Left cardiac atrium (tissue), 4 donors: ENCODE measurements at regions of chr3 and their contacts with region 1.

Region 1: DNA sequence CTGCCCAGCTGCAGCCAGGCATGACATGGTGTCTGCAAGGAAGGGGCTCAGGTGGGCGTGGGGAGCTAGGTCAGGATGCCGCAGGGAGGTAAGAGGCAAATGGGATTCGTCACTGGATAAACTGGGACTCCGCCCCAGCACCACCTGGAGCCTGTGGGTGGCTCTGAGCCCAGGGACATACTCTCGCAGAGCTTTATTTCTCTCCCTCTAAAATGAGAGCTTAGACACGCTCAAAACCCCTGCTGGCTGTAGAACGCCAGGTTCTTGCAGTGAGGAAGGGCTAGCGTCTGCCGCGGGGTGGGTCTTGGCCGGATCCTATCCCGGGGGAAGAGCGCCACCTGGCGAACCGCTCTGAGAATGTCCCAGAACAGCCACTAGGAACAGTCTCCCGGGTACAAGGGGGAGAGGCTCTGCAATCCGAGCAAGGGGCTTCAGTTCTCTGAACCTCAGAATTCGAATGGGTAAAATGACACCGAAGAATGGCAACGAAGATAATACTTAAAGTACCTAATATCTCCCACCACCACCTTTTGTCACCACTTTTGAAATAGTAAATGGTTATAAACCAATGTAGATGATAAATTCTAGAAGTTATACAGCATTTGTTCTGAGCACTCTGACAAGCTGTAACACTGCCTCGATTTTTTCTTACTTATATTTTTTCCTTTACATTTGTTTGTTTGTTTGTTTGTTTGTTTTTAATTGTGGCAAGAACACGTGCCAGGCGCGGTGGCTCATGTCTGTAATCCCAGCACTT is 53.2 kb upstream of the SRGAP3 start:
- DNase-seq: peak; percentile 82
- ATAC-seq: peak; percentile 94 to 97

Region 2: DNA sequence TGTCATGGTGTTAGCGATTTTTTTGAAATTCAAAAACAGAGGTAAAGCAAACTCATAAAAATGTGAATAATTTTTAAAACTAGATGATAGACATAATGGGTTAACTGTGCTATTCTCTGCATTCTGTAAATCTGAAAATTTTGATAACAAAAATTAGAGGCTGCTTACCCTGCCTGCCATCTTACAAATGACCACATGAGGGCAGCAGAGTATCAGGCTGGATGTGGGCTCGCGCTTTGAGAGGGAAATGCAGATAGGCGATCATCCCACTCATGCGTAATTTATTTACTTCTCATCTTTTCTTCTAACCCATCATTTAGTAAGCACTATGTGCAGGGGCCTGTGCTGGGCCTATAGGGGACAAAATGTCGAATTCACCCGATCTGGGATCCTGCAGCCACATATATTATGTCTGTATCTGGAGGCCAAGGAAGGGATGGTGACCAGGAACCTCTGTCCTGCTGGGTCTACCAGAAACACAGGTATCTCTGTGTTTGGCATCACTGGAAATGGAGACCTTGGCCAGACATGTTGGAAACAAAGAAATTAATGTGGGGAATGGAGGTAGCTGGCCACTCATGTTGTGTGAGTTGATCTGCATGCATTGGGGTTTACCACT is 331.5 kb before region 1 on chr3:
- intact Hi-C with region 1: loop called (anchors 1 to 5 kb)
- DNase-seq: peak; percentile 50
- ATAC-seq: peak; percentile 65 to 68

Region 3: DNA sequence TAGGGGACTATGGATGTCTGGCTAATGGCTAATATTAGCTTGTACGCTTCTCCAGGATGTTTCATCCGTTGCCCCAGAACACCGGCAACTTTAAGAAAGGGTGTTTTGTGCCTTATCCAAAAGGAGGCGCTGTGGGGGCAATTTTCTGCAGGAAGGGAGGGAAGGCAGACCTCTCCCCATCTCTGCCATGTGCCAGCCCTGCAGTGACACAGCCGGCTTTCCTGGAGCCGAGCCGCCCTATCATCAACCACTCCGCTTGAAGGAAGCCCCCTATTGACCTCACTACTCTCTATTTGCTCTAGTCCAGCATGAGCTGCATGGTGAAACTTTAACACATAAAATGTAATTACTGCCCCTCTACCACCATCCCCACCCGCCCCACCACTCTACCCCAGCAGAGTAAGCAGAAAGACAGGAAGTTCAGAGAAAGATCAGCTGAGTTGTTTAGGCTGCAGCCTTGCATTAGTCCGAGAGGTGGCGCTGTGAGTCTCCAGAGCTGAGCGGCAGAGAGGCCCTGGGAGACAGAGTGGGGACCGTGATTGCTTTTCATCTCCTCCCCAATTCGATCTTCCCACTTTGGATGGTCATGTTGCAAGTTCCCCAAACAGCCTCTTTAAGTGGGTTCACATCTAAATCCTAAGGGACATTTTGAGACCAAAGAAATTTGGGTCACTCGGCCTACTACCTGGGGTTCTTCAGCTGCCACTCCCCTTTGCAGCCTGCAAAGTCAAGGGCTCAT is 314.8 kb before region 1 on chr3:
- intact Hi-C with region 1: loop called in 1 of 2 experiments (anchors 5 kb)
- DNase-seq: peak; percentile 60
- ATAC-seq: peak; percentile 72 to 75

Region 4: GRCh38 chr3:9067352-9067975 is 235.1 kb before region 1 on chr3:
- intact Hi-C with region 1: loop called (anchors 5 kb)
- DNase-seq: peak; percentile 39
- ATAC-seq: peak; percentile 84